ENCODE measurements at regions of chr14 and their contacts with region 1.

Region 1: GRCh38 chr14:61475316-61475715 is 153.9 kb downstream of the PRKCH start:
- DNase-seq: no peak
- ATAC-seq: peak; percentile 48
- H3K4me3 ChIP-seq: no peak overlapping the region
- H3K27ac ChIP-seq: no peak overlapping the region
- H3K4me1 ChIP-seq: peaks cover 67% of the 10 kb centered on the region
- H3K27me3 ChIP-seq: no peaks in the 10 kb centered on the region
- CTCF ChIP-seq: peak; percentile 54 to 59 (median 57); a peak in 5 of 6 replicates
- EP300 ChIP-seq: no peak
- POLR2A ChIP-seq: no peak
- RAD21 ChIP-seq: peak; percentile 55

Region 2: GRCh38 chr14:61503167-61503801 is 28.0 kb after region 1 on chr14:
- CTCF ChIA-PET with region 1: interaction called, 31 read pairs
- POLR2A ChIA-PET with region 1: interaction called, 3 read pairs
- RAD21 ChIA-PET with region 1: interaction called, 14 read pairs
- SMC1A ChIA-PET with region 1: interaction called, 30 read pairs
- in situ Hi-C with region 1: no loop called
- intact Hi-C with region 1: loop called (anchors 2 kb)
- DNase-seq: peak; percentile 94
- ATAC-seq: peak; percentile 93
- H3K4me3 ChIP-seq: peak overlapping the region; percentile 19; the same call in 1 of the 2 replicates
- H3K27ac ChIP-seq: peak overlapping the region; percentile 95
- H3K4me1 ChIP-seq: peaks cover 30% of the 10 kb centered on the region
- H3K27me3 ChIP-seq: no peaks in the 10 kb centered on the region
- CTCF ChIP-seq: no peak
- EP300 ChIP-seq: peak; percentile 30 to 87; a peak in 3 of 4 replicates
- POLR2A ChIP-seq: no peak
- RAD21 ChIP-seq: no peak

Region 3: GRCh38 chr14:61620130-61620946 is 145.0 kb after region 1 on chr14:
- CTCF ChIA-PET with region 1: no interaction called
- POLR2A ChIA-PET with region 1: no interaction called
- RAD21 ChIA-PET with region 1: no interaction called
- SMC1A ChIA-PET with region 1: no interaction called
- in situ Hi-C with region 1: no loop called
- intact Hi-C with region 1: no loop called
- DNase-seq: peak; percentile 35
- ATAC-seq: peak; percentile 88
- H3K4me3 ChIP-seq: no peak overlapping the region
- H3K27ac ChIP-seq: no peak overlapping the region
- H3K4me1 ChIP-seq: peaks cover 2% of the 10 kb centered on the region; the same call in 1 of the 2 replicates
- H3K27me3 ChIP-seq: no peaks in the 10 kb centered on the region
- CTCF ChIP-seq: no peak
- EP300 ChIP-seq: peak in 1 of 2 experiments; percentile 55; a peak in 1 of 4 replicates
- POLR2A ChIP-seq: no peak
- RAD21 ChIP-seq: no peak

Region 4: DNA sequence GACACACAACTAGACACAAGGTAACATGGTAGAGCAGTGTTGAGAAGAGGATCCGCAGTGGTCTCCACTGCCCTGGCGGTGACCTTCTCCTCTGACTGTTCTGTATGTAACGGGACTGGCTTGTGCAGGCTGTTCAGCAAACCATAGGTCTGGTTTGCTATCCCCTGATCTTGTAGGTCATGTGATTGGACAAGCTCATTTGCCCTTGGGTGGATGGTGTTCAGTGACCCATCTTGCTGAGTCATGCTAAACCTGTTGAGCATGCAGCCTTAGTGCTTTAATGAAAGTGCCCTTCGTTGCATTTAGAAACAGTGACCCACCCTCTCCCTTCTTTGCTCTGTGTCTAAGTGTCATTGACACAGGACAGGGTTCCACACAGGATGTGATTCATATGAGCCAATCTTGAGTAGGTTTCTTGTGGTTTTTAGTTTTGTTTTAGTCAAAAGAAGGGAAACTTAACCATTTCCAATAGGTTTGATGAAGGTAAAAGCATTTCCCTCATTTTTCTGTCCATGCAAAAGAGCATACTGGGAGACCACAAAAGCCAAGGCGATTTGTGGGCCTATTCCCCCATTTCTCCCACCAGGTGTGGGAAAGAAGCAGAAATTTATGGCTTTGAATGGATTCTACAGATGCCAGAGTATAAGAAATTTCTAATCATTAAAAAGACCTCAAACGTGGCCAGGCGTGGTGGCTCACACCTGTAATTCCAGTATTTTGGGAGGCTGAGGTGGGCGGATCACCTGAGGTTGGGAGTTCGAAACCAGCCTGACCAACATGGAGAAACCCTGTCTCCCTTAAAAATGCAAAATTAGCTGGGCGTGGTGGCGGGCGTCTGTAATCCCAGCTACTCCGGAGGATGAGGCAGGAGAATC is 187.4 kb after region 1 on chr14:
- CTCF ChIA-PET with region 1: interaction called, 3 read pairs
- POLR2A ChIA-PET with region 1: no interaction called
- RAD21 ChIA-PET with region 1: interaction called, 5 read pairs
- SMC1A ChIA-PET with region 1: interaction called, 5 read pairs
- in situ Hi-C with region 1: no loop called
- intact Hi-C with region 1: loop called (anchors 2 kb)
- DNase-seq: peak; percentile 100
- ATAC-seq: peak; percentile 87
- H3K4me3 ChIP-seq: peak overlapping the region; percentile 50
- H3K27ac ChIP-seq: peak overlapping the region; percentile 79
- H3K4me1 ChIP-seq: peaks cover 34% of the 10 kb centered on the region
- H3K27me3 ChIP-seq: no peaks in the 10 kb centered on the region
- CTCF ChIP-seq: 0 out of 6 replicates have a peak, but pooled peaks of 1 of the 3 experiments have one; percentile 13
- EP300 ChIP-seq: peak; percentile 73 to 93; a peak in 3 of 4 replicates
- POLR2A ChIP-seq: peak; percentile 82
- RAD21 ChIP-seq: peak; percentile 29; the same call in 1 of the 2 replicates

Region 5: GRCh38 chr14:61730756-61731373 is 255.5 kb after region 1 on chr14:
- CTCF ChIA-PET with region 1: interaction called, 12 read pairs
- POLR2A ChIA-PET with region 1: no interaction called
- RAD21 ChIA-PET with region 1: interaction called, 13 read pairs
- SMC1A ChIA-PET with region 1: interaction called, 18 read pairs
- in situ Hi-C with region 1: no loop called
- intact Hi-C with region 1: loop called (anchors 5 kb)
- DNase-seq: no peak
- ATAC-seq: 0 out of 3 replicates have a peak, but pooled peaks have one; percentile 25
- H3K4me3 ChIP-seq: no peak overlapping the region
- H3K27ac ChIP-seq: no peak overlapping the region
- H3K4me1 ChIP-seq: no peaks in the 10 kb centered on the region
- H3K27me3 ChIP-seq: no peaks in the 10 kb centered on the region
- CTCF ChIP-seq: peak in 1 of 3 experiments; percentile 25; a peak in 2 of 6 replicates
- EP300 ChIP-seq: no peak
- POLR2A ChIP-seq: no peak
- RAD21 ChIP-seq: peak; percentile 62

Region 6: DNA sequence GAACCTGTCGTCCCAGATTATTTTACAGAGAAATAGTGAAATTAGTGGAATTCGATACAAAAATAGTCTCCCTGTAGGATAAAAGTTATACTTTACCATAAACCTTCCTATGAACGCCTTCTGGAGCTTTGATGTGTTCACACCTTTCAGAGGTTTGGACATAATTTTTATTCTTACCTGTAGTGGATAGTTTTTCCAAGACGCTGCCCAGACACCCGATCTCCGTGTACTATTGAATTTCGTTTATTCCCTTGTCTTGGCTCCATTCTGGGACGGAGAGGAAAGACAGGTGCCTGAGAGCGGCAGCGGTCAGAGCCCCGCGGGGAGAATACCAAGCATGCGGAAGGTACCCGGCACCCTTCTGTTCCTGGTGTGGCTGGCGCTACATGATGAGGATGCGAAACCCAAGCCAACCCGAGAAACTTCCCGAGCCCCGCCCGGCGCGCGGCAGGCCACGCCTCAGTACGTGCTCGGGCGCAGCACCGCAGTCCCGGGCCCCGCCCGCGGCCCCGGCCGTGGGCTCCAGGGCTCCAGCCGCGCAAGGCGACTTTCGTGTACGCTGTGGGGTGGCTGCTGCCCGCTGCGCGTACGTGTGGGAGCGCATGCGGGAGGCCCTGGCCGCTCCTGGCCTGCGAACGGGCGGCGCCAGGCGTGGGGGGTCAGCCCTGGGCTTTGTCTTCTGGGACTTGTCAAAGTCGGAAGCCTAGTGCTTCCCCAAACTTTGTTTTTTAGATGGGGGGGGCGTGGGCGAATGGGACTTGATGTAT is 275.6 kb after region 1 on chr14:
- CTCF ChIA-PET with region 1: interaction called, 9 read pairs
- POLR2A ChIA-PET with region 1: interaction called, 5 read pairs
- RAD21 ChIA-PET with region 1: interaction called, 4 read pairs
- SMC1A ChIA-PET with region 1: interaction called, 15 read pairs
- in situ Hi-C with region 1: no loop called
- intact Hi-C with region 1: no loop called
- DNase-seq: peak; percentile 83
- ATAC-seq: peak; percentile 93
- H3K4me3 ChIP-seq: peak overlapping the region; percentile 79
- H3K27ac ChIP-seq: peak overlapping the region; percentile 59
- H3K4me1 ChIP-seq: peaks cover 19% of the 10 kb centered on the region
- H3K27me3 ChIP-seq: no peaks in the 10 kb centered on the region
- CTCF ChIP-seq: no peak
- EP300 ChIP-seq: peak; percentile 45 to 66; a peak in 2 of 4 replicates
- POLR2A ChIP-seq: peak; percentile 85
- RAD21 ChIP-seq: no peak

Measured in GM12878 (cell line).